GM12878 (cell line): ENCODE measurements at regions of chr1 and their contacts with region 1.

Region 1: GRCh38 chr1:200971955-200972711 is 51.4 kb downstream of the KIF21B start:
- DNase-seq: no peak
- ATAC-seq: no peak
- H3K4me3 ChIP-seq: no peak overlapping the region
- H3K27ac ChIP-seq: no peak overlapping the region
- H3K4me1 ChIP-seq: peaks cover 23% of the 10 kb centered on the region
- H3K27me3 ChIP-seq: no peaks in the 10 kb centered on the region
- CTCF ChIP-seq: peak; percentile 62 to 82 (median 75)
- EP300 ChIP-seq: no peak
- POLR2A ChIP-seq: no peak
- RAD21 ChIP-seq: peak; percentile 88

Region 2: DNA sequence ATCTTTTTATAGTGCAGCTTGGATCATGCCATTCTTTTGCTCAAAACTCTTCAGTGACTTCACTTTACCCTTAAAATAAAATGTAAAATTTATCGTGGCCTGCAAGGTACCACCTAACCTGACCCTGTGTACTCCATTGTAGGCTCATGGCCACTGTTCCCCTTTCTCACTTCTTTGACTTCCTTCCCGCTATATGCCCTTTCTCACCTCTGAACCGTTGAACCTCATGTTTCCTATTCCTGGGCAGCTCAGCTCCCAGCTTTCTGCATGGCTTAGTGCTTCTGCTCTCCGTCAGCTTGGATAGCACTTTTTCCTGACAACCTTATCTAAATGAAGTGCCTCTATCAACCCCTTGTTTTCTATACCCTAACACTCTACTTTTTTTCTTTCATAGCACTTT is 160.4 kb before region 1 on chr1:
- CTCF ChIA-PET with region 1: interaction called, 11 read pairs
- POLR2A ChIA-PET with region 1: no interaction called
- RAD21 ChIA-PET with region 1: no interaction called
- SMC1A ChIA-PET with region 1: interaction called, 10 read pairs
- in situ Hi-C with region 1: no loop called
- intact Hi-C with region 1: no loop called
- DNase-seq: no peak
- ATAC-seq: no peak
- H3K4me3 ChIP-seq: no peak overlapping the region
- H3K27ac ChIP-seq: no peak overlapping the region
- H3K4me1 ChIP-seq: no peaks in the 10 kb centered on the region
- H3K27me3 ChIP-seq: no peaks in the 10 kb centered on the region
- CTCF ChIP-seq: no peak
- EP300 ChIP-seq: no peak
- POLR2A ChIP-seq: no peak
- RAD21 ChIP-seq: no peak

Region 3: GRCh38 chr1:200896531-200897196 is 75.5 kb before region 1 on chr1:
- CTCF ChIA-PET with region 1: interaction called, 112 read pairs
- POLR2A ChIA-PET with region 1: interaction called, 27 read pairs
- RAD21 ChIA-PET with region 1: interaction called, 139 read pairs
- SMC1A ChIA-PET with region 1: interaction called, 107 read pairs
- in situ Hi-C with region 1: no loop called
- intact Hi-C with region 1: loop called (anchors 2 kb)
- DNase-seq: no peak
- ATAC-seq: no peak
- H3K4me3 ChIP-seq: no peak overlapping the region
- H3K27ac ChIP-seq: no peak overlapping the region
- H3K4me1 ChIP-seq: peaks cover 19% of the 10 kb centered on the region
- H3K27me3 ChIP-seq: no peaks in the 10 kb centered on the region
- CTCF ChIP-seq: no peak
- EP300 ChIP-seq: no peak
- POLR2A ChIP-seq: no peak
- RAD21 ChIP-seq: no peak

Region 4: DNA sequence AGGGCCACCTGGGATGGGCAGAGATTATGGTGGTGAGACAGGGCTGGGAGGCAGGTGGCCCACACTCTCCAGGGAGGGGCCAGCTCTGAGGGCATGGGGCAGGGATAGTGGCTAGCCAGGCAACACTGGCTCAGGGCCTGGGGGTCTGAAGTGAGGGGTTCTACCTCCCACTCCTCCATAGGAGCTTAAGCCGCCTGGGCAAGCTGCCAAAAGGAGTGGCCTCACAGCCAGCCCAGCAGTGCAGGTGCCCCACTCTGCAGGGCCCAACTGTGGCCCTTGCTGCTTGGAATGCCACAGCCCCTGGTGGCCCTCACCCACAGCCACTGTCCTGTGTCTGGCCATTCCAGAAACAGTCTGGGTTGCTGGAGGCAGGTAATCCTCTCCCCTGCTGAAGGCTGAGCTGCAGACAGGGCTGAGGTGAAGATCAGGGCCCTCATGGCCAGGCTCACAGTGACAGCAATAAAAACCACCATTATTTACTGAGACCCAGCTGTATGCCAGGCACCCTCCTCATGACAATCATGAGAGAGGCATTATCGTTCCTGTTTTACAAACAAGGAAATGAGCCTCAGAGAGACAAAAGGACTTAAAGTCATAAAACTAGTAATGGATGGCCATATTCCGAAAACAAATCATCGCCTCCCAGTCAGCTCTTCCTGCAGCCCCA is 20.4 kb after region 1 on chr1:
- CTCF ChIA-PET with region 1: interaction called, 11 read pairs
- POLR2A ChIA-PET with region 1: no interaction called
- RAD21 ChIA-PET with region 1: interaction called, 5 read pairs
- SMC1A ChIA-PET with region 1: no interaction called
- in situ Hi-C with region 1: no loop called
- intact Hi-C with region 1: no loop called
- DNase-seq: no peak
- ATAC-seq: no peak
- H3K4me3 ChIP-seq: no peak overlapping the region
- H3K27ac ChIP-seq: no peak overlapping the region
- H3K4me1 ChIP-seq: no peaks in the 10 kb centered on the region
- H3K27me3 ChIP-seq: no peaks in the 10 kb centered on the region
- CTCF ChIP-seq: no peak
- EP300 ChIP-seq: no peak
- POLR2A ChIP-seq: no peak
- RAD21 ChIP-seq: no peak

Region 5: DNA sequence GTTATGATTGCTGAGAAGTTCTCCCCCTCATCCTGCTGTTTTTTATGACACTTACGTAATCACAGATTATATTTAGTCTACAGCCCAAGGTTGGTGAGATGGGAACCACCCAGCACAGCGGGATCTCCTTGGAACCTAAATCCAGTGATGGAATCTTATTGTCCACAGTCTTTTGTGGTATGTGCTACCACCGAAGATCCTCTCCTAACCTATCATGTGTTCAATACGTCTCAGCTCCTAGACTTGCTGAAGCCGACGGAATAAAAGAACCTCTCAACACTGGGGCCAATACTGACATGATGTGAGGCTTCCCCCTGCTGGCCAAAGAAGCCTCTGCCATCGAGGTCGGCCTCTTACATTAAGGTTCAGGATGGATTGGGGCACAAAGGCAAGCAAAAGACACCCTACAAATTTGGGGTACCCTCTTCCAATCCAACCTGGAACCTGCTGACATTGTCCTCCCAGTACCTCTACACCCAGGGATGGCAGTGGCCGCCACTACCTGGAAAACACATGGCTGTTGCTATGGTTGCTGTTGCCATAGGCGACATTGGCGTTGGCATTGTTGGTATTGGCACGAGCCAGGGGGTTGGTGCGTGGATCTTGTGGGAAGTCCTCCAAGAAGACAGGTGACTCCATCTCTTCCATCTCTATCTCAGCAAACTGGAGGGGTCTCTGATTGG is 70.8 kb after region 1 on chr1:
- CTCF ChIA-PET with region 1: interaction called, 199 read pairs
- POLR2A ChIA-PET with region 1: interaction called, 12 read pairs
- RAD21 ChIA-PET with region 1: interaction called, 128 read pairs
- SMC1A ChIA-PET with region 1: interaction called, 83 read pairs
- in situ Hi-C with region 1: loop called (anchors 5 kb)
- intact Hi-C with region 1: loop called (anchors 1 kb)
- DNase-seq: no peak
- ATAC-seq: peak; percentile 97
- H3K4me3 ChIP-seq: no peak overlapping the region
- H3K27ac ChIP-seq: no peak overlapping the region
- H3K4me1 ChIP-seq: no peaks in the 10 kb centered on the region
- H3K27me3 ChIP-seq: no peaks in the 10 kb centered on the region; a peak in 1 of 4 replicates
- CTCF ChIP-seq: peak; percentile 87 to 94 (median 93); a peak in 5 of 6 replicates
- EP300 ChIP-seq: no peak
- POLR2A ChIP-seq: no peak
- RAD21 ChIP-seq: peak; percentile 99

Region 6: GRCh38 chr1:201214461-201214860 is 242.3 kb after region 1 on chr1:
- CTCF ChIA-PET with region 1: no interaction called
- POLR2A ChIA-PET with region 1: no interaction called
- RAD21 ChIA-PET with region 1: no interaction called
- SMC1A ChIA-PET with region 1: no interaction called
- in situ Hi-C with region 1: no loop called
- intact Hi-C with region 1: no loop called
- DNase-seq: no peak
- ATAC-seq: peak; percentile 16; the same call in 1 of the 3 replicates
- H3K4me3 ChIP-seq: no peak overlapping the region
- H3K27ac ChIP-seq: no peak overlapping the region
- H3K4me1 ChIP-seq: no peaks in the 10 kb centered on the region
- H3K27me3 ChIP-seq: peaks cover 0 to 1% of the 10 kb centered on the region in 2 experiments; a peak in 2 of 4 replicates
- CTCF ChIP-seq: peak in 1 of 3 experiments; percentile 11; a peak in 1 of 6 replicates
- EP300 ChIP-seq: no peak
- POLR2A ChIP-seq: no peak
- RAD21 ChIP-seq: no peak

Region 7: DNA sequence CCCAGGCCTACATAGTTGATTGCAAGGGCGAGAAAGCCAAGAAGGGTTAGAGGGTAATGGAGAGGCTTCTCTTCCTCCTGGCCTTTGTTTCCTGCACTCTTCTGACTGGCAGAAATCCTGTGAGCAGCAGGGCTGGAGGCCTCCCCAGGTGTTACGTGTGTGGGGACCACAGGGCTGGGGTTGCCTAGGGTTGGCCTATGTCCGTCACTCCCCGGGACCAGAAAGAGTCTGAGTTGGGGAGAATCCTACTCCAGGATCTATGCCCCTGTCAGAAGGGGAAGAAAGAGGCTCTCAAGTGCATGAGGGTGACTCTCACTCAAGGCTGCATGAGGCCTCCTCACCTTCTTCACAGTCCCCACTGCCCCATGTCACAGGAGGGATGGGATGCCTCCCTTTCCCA is 257.0 kb after region 1 on chr1:
- CTCF ChIA-PET with region 1: no interaction called
- POLR2A ChIA-PET with region 1: no interaction called
- RAD21 ChIA-PET with region 1: no interaction called
- SMC1A ChIA-PET with region 1: no interaction called
- in situ Hi-C with region 1: no loop called
- intact Hi-C with region 1: no loop called
- DNase-seq: no peak
- ATAC-seq: no peak
- H3K4me3 ChIP-seq: no peak overlapping the region
- H3K27ac ChIP-seq: no peak overlapping the region
- H3K4me1 ChIP-seq: no peaks in the 10 kb centered on the region
- H3K27me3 ChIP-seq: peaks cover 0 to 6% of the 10 kb centered on the region in 2 experiments; a peak in 3 of 4 replicates
- CTCF ChIP-seq: no peak
- EP300 ChIP-seq: no peak
- POLR2A ChIP-seq: no peak
- RAD21 ChIP-seq: no peak